ENCODE measurements at regions of chr1 and their contacts with region 1.

Region 1: GRCh38 chr1:2255420-2256369 is 27.6 kb downstream of the SKI start:
- DNase-seq: peak; percentile 79 to 96
- ATAC-seq: peak; percentile 71 to 87 (median 71)
- H3K4me3 ChIP-seq: no peak overlapping the region
- H3K4me3 Mint-ChIP-seq: no peak overlapping the region
- H3K27ac ChIP-seq: peak overlapping the region; percentile 98
- H3K27ac Mint-ChIP-seq: no peak overlapping the region
- H3K4me1 ChIP-seq: peaks cover 69% of the 10 kb centered on the region
- H3K4me1 Mint-ChIP-seq: peaks cover 31 to 33% of the 10 kb centered on the region in 2 donors
- H3K27me3 ChIP-seq: no peaks in the 10 kb centered on the region
- H3K27me3 Mint-ChIP-seq: no peaks in the 10 kb centered on the region
- CTCF ChIP-seq: no peak

Region 2: GRCh38 chr1:2229037-2229864 is 26.4 kb before region 1 on chr1:
- intact Hi-C with region 1: loop called (anchors 1 kb)
- DNase-seq: peak; percentile 61 to 76
- ATAC-seq: peak; percentile 7 to 9 (median 8)
- H3K4me3 ChIP-seq: peak overlapping the region; percentile 58
- H3K4me3 Mint-ChIP-seq: peak overlapping the region; percentile 93
- H3K27ac ChIP-seq: peak overlapping the region; percentile 73
- H3K27ac Mint-ChIP-seq: peak overlapping the region; percentile 85 to 97
- H3K4me1 ChIP-seq: peaks cover 63% of the 10 kb centered on the region
- H3K4me1 Mint-ChIP-seq: peaks cover 38 to 60% of the 10 kb centered on the region in 2 donors
- H3K27me3 ChIP-seq: no peaks in the 10 kb centered on the region
- H3K27me3 Mint-ChIP-seq: peaks cover 0 to 2% of the 10 kb centered on the region in 2 donors
- CTCF ChIP-seq: no peak

Region 3: GRCh38 chr1:2279210-2279639 is 23.5 kb after region 1 on chr1:
- intact Hi-C with region 1: no loop called
- DNase-seq: no peak
- ATAC-seq: no peak
- H3K4me3 ChIP-seq: no peak overlapping the region
- H3K4me3 Mint-ChIP-seq: no peak overlapping the region
- H3K27ac ChIP-seq: no peak overlapping the region
- H3K27ac Mint-ChIP-seq: no peak overlapping the region
- H3K4me1 ChIP-seq: peaks cover 47% of the 10 kb centered on the region
- H3K4me1 Mint-ChIP-seq: peaks cover 16 to 32% of the 10 kb centered on the region in 2 donors
- H3K27me3 ChIP-seq: no peaks in the 10 kb centered on the region
- H3K27me3 Mint-ChIP-seq: no peaks in the 10 kb centered on the region
- CTCF ChIP-seq: no peak

Region 4: DNA sequence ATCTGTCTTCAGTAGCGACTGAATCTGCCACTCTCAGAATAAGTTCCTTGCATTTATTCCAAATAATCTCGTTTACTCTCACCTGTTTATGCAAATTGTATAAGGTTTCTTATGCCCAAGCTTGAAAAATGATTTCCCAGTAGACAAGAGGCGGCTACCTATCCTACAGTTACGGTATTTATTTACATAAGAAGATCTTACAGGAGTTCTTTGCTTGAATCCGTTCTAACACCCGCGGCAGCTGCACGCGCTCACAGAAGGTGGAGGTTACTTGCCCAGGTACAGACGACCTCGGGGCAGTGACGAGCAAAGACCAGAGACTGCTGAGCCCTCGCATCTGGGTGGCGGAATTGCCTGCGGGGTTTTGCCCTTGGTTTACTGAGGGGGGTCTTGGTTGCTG is 52.3 kb after region 1 on chr1:
- intact Hi-C with region 1: no loop called
- DNase-seq: peak in 1 of 2 donors; percentile 49
- ATAC-seq: no peak
- H3K4me3 ChIP-seq: no peak overlapping the region
- H3K4me3 Mint-ChIP-seq: no peak overlapping the region
- H3K27ac ChIP-seq: no peak overlapping the region
- H3K27ac Mint-ChIP-seq: peak overlapping the region; percentile 41 to 45
- H3K4me1 ChIP-seq: peaks cover 43% of the 10 kb centered on the region
- H3K4me1 Mint-ChIP-seq: peaks cover 12 to 23% of the 10 kb centered on the region in 2 donors
- H3K27me3 ChIP-seq: no peaks in the 10 kb centered on the region
- H3K27me3 Mint-ChIP-seq: no peaks in the 10 kb centered on the region
- CTCF ChIP-seq: no peak

Region 5: DNA sequence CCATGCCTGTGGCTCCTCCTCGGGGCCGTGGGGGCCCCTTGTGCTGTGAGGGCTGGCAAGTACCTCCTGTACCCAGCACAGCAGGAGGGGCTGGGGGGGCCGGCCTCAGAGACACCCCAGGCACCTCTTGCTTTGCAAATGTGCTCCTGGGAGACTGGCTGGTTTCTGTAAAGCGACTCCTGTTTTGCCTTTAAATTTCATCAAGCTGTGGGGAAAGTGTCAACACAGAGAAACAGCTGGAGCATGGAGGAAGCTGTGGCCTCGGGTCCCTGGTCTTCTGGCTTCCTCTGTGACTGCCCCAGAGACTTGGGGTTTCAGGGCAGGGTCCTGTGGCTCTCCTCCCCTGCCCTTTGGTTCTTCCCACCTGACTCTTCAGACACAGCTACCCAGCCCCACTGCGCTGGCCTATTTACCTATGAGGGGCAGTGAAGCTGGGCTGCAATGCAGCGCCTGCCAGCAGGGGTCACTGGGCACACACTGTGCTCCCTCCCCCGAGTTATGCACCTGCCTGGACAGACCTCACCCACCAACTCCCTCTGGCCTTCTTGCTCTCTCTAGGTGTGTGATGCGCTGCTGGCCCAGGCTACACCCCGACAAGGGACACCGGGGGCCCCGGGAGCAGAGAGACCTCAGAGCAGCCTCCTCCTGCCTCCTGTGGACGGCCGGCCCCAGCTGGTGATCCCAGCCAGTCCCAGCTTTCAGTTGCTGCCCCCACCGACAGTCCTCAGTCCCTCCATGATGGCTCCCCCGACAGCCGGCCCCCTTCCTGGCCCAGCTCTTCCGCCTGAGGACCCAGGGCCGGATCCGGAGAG is 174.3 kb after region 1 on chr1:
- intact Hi-C with region 1: no loop called
- DNase-seq: peak in 1 of 2 donors; percentile 26
- ATAC-seq: no peak
- H3K4me3 ChIP-seq: no peak overlapping the region
- H3K4me3 Mint-ChIP-seq: no peak overlapping the region
- H3K27ac ChIP-seq: no peak overlapping the region
- H3K27ac Mint-ChIP-seq: no peak overlapping the region
- H3K4me1 ChIP-seq: peaks cover 12% of the 10 kb centered on the region
- H3K4me1 Mint-ChIP-seq: peaks cover 0 to 15% of the 10 kb centered on the region in 2 donors
- H3K27me3 ChIP-seq: no peaks in the 10 kb centered on the region
- H3K27me3 Mint-ChIP-seq: no peaks in the 10 kb centered on the region
- CTCF ChIP-seq: no peak

Measured in natural killer cell (primary cell).